Left ventricle myocardium inferior (tissue), 1 donor: ENCODE measurements at regions of chr10 and their contacts with region 1.

Region 1: DNA sequence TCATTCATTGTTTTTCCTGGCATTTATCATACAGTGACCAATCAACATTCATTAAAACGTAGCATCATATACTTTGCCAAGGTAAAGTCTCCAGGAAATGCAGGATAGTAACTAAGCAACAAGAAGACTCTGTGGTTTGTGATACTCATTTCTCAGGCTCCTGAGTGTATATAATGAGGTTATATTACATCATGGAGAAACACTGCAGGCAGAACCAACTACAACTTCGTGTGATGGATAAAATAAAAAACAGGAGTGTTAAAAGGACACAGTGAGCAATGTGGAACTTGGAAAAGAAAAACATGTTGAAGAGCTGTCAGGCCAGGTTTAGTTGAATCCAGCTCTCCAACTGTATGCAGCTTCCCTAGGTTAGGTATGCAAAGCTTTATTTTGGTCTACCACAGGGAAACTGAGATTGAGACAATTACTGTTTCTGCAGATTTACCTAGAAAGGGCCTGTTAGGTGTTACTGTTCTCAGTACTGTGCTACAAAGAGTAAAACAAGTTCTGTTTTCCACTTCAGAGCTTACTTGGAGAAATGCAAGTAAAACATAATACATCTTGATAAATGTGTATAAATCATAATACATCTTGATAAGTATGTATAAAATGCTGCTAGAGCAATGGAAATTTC is 7.8 kb upstream of the CCNY start:
- DNase-seq: no peak
- H3K4me3 ChIP-seq: no peak overlapping the region
- H3K27ac ChIP-seq: peak overlapping the region; percentile 46
- H3K4me1 ChIP-seq: peaks cover 72% of the 10 kb centered on the region
- H3K27me3 ChIP-seq: no peaks in the 10 kb centered on the region
- CTCF ChIP-seq: no peak

Region 2: DNA sequence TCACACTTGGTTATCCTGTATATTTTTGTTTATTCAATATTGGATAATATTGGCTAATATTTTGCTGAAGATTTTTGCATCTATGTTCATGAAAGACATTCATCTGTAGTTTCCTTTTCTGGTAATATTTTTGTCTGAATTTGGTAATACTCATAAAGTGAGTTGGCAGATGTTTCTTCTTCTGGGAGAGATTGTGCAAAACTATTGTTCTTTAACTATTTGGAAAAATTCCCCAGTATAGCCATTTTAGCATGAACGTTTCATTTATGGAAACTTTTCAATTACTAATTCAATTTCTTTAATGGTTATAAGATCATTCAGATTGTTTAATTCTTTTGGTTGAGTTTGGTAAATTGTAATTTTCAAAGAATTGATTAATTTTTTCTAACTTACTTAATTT is 874.4 kb after region 1 on chr10:
- intact Hi-C with region 1: loop called (anchors 10 kb)
- DNase-seq: no peak
- H3K4me3 ChIP-seq: no peak overlapping the region
- H3K27ac ChIP-seq: no peak overlapping the region
- H3K4me1 ChIP-seq: no peaks in the 10 kb centered on the region
- H3K27me3 ChIP-seq: no peaks in the 10 kb centered on the region
- CTCF ChIP-seq: no peak